AG04450 (cell line): ENCODE measurements at regions of chr14 and their contacts with region 1.

Region 1: GRCh38 chr14:24372701-24373416 is 4.9 kb downstream of the NFATC4 start:
- DNase-seq: no peak
- H3K4me3 ChIP-seq: no peak overlapping the region
- H3K27ac ChIP-seq: no peak overlapping the region
- H3K27me3 ChIP-seq: no peaks in the 10 kb centered on the region
- CTCF ChIP-seq: no peak

Region 2: DNA sequence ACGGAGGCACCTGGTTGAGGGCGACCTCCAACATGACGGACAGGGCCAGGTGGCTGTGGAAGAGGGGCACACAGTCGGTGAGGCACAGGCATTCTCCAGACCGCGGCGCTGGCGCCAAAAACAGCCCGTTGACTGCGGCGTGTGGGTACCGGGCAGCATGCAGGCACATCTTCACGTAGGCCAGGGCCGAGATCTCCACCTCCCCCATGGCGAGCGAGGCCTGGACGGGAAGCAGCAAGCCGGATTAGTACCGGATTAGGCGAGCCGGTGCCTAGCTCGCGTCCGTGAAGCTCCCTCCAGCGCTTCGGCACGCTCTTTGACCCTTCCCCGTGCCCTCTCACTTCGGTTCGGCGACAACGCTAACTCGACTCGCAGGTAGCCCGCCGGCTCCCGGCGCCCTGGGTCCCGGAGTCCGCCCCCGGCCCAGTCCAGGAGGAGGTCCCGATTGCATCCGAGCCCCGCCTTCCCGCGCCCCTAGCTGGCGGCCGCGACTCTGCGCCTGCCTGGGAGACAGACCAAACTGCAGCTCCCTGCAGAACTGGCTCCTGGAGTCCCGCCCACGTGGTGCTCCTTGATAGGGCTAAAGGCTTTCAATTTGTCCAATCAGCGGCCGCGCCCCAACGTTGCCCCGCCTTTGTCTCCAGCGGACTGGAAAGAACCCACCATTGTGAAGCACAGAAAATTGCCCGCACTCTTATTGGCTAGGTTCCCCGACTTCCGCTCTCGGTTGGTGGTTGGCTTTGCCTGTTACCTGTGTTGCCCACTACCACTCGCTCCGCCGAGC is 231.6 kb before region 1 on chr14 and contains the start of gene EMC9:
- CTCF ChIA-PET with region 1: no interaction called
- POLR2A ChIA-PET with region 1: no interaction called
- DNase-seq: peak; percentile 97
- H3K4me3 ChIP-seq: peak within 1 kb of the TSS; percentile 95
- H3K27ac ChIP-seq: peak within 1 kb of the TSS; percentile 81
- H3K27me3 ChIP-seq: no peaks in the 10 kb centered on the region
- CTCF ChIP-seq: peak; percentile 48
- polyA plus RNA-seq, gene EMC9: 4.4 and 6.3 TPM in 2 replicates

Region 3: DNA sequence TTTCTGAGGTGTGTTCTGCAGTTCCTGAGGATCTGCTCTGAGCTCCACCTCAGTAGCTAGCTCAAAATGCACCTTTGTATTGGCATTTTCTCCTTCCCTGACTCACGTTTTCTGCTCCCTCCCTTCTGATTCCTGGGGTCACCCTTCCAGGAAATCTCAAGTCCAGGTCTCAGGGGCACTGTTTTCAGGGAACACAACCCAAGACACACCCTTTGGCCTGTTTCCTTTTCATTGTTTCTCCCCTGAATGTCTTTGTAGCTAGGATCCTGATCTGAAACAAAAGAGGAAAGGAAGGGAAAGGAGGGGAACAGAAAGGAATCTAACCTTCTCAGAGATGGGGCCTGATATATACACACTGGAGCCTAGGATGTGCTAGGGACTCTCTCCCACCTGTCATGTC is 25.7 kb before region 1 on chr14:
- CTCF ChIA-PET with region 1: no interaction called
- POLR2A ChIA-PET with region 1: no interaction called
- DNase-seq: no peak
- H3K4me3 ChIP-seq: no peak overlapping the region
- H3K27ac ChIP-seq: no peak overlapping the region
- H3K27me3 ChIP-seq: peaks cover 48% of the 10 kb centered on the region
- CTCF ChIP-seq: no peak

Region 4: GRCh38 chr14:24389201-24389848 is 16.5 kb after region 1 on chr14:
- CTCF ChIA-PET with region 1: interaction called, 3 read pairs
- POLR2A ChIA-PET with region 1: interaction called, 13 read pairs
- DNase-seq: no peak
- H3K4me3 ChIP-seq: no peak overlapping the region
- H3K27ac ChIP-seq: peak overlapping the region; percentile 21
- H3K27me3 ChIP-seq: peaks cover 5% of the 10 kb centered on the region
- CTCF ChIP-seq: no peak

Region 5: GRCh38 chr14:24630872-24631477 is 258.1 kb after region 1 on chr14:
- CTCF ChIA-PET with region 1: no interaction called
- POLR2A ChIA-PET with region 1: no interaction called
- DNase-seq: no peak
- H3K4me3 ChIP-seq: no peak overlapping the region
- H3K27ac ChIP-seq: no peak overlapping the region
- H3K27me3 ChIP-seq: no peaks in the 10 kb centered on the region
- CTCF ChIP-seq: no peak

Region 6: DNA sequence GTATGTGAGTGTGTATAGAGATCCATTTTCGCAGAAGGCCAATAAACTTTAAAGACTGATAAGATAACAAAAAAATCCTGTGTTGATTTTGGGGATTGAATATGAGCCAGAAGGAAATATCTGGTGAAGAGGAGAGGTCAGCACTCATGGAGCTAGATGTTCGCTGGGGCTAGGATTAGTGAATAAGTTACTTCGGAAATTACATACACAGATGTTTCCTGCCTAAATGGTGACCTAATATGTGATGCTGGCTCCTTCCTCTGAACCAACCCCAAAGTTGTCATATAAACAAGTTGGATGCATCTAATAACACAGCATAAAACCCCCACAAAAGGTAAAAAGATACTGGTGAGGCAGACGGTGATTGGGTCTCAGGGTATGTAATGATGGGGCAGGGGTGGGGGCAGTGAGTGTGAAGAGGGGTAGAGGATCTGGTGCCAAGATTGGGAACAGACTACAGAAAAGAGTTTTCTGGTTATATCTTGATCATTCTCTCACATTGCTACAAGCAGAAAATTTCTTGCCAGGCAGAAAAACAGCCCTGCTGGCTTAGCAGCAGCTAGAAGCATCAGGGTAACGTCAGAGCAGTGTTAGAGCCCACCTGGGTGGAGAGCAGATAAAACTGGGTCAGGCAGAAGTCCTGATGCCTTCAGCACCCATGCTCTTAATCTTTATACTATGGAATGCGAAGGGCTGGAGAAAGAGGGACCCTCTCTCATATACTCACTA is 401.5 kb after region 1 on chr14:
- CTCF ChIA-PET with region 1: no interaction called
- POLR2A ChIA-PET with region 1: no interaction called
- DNase-seq: no peak
- H3K4me3 ChIP-seq: no peak overlapping the region
- H3K27ac ChIP-seq: no peak overlapping the region
- H3K27me3 ChIP-seq: no peaks in the 10 kb centered on the region
- CTCF ChIP-seq: no peak